GM12878 (cell line): ENCODE measurements at regions of chr2 and their contacts with region 1.

Region 1: DNA sequence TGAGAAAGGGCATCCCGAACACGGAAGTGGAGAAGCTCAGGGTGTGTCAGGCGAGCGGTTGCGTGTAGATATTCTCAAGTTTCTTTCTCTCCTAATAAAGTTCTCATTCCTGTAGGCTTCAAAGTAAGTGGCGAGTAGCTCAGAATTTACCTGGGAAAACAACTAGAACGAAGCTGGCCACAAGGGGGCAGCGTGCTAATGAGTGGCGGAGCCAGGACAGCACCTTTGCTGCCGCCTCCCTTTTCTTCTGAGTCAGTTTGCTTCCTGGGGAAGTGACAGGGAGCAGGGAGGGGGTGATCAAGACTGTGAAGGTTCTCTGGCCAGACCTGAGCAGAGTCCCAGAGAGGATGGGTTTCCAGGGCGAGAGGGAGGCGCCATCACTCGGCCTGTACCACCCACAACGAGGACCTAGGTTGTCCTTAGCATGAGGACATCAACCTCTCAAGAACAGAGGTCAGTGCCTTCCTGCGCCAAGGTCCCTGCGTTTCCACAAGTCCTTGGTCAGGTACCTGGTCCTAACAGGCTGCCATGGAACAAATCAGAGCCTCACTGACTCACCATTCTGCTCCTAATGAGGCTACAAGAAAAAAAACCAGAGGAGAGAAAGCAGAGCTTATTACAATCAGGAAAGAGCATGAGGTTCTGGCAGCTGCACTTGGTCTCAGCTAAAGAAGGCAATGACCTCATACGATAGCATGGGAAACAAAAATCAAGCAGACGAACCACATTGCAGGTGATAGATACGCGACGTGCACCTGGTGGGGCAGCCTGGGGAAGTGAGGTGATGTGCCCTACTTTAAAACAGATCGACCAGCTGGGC is 98.6 kb downstream of the PLB1 start:
- DNase-seq: peak; percentile 28
- ATAC-seq: peak; percentile 94
- H3K4me3 ChIP-seq: no peak overlapping the region
- H3K27ac ChIP-seq: no peak overlapping the region
- H3K4me1 ChIP-seq: 0 out of 2 replicates have a peak, but pooled peaks cover 3% of the 10 kb centered on the region
- H3K27me3 ChIP-seq: no peaks in the 10 kb centered on the region; a peak in 1 of 4 replicates
- CTCF ChIP-seq: peak; percentile 78 to 86 (median 79)
- EP300 ChIP-seq: no peak
- POLR2A ChIP-seq: no peak
- RAD21 ChIP-seq: peak; percentile 90

Region 2: DNA sequence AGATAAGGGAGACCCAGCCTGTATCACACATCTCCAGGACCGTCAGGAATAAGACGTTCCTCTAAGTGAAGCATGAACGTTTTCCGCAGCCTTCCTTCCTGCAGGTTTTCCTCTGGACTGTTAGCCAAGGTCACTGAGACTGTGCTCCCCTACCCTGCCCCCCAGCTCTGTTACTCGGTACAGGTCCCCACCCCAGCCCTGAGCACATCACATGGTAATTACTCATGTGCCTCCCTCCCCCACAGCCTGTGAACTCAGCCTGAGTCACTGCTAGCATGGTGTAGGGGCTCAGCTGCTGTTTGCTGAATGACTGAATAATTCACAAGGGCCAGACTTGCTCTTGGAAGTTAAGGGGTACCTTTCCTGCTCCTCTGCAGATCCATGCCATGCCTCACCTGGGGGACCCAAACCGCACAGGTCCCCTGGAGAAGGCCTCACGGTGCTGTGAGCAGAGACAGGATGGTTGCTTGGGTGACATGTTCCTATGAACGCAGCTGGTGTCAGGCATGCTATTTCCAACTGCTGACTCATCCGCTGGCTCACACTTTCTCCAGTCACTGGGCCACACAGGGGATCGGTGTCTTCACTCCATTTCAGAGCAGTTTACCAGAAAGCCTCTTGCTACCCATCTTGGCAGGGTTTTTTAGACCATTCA is 10.5 kb before region 1 on chr2:
- CTCF ChIA-PET with region 1: interaction called, 22 read pairs
- POLR2A ChIA-PET with region 1: no interaction called
- RAD21 ChIA-PET with region 1: interaction called, 3 read pairs
- SMC1A ChIA-PET with region 1: interaction called, 3 read pairs
- in situ Hi-C with region 1: no loop called
- intact Hi-C with region 1: no loop called
- DNase-seq: no peak
- ATAC-seq: peak; percentile 56
- H3K4me3 ChIP-seq: no peak overlapping the region
- H3K27ac ChIP-seq: no peak overlapping the region
- H3K4me1 ChIP-seq: peaks cover 7% of the 10 kb centered on the region; the same call in 1 of the 2 replicates
- H3K27me3 ChIP-seq: no peaks in the 10 kb centered on the region
- CTCF ChIP-seq: no peak
- EP300 ChIP-seq: no peak
- POLR2A ChIP-seq: no peak
- RAD21 ChIP-seq: no peak

Region 3: DNA sequence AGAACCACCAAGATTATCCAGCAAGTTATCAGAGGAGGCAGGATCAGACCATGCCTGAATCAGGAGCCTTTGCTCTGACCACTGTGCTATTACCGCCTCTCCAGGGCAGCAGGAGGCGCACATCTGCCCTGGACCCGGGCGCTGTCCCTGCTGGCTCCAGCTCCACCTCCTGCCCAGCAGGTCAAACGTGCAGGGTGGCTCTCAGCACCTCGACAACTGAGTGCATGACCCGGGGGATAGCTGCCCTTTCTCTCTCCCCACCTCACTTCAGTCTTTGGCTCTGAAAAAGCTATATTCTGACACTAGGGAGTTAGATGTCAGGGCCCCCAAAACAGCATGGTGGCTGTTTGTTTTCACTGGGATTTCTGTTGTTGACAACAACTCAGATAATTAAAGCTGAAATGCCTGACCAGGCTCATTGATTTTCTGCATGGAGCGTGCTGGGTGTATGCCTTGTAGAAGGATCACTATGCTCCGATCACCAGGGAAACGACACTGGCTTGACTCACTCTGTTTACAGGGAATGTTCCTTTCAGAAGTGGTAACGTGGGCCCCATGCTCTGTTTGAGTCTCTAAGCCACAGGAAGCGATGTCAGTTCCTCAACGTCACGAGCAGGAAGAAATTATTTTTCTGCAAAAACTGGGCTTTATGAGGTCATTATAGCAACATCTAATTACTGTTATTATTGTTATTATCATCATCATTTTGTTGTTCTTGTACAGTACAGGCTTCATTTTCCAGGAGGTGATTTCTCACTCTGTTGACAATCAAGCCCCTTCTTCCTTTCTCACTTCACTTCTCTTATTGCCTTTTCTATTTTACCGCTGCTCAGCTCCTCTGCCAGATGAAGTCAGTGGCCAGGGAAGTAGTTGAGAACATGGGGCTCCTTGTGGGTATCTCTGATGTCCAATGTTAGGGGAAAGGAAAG is 26.9 kb after region 1 on chr2:
- CTCF ChIA-PET with region 1: interaction called, 14 read pairs
- POLR2A ChIA-PET with region 1: no interaction called
- RAD21 ChIA-PET with region 1: interaction called, 4 read pairs
- SMC1A ChIA-PET with region 1: interaction called, 4 read pairs
- in situ Hi-C with region 1: no loop called
- intact Hi-C with region 1: no loop called
- DNase-seq: no peak
- ATAC-seq: peak; percentile 75
- H3K4me3 ChIP-seq: no peak overlapping the region
- H3K27ac ChIP-seq: no peak overlapping the region
- H3K4me1 ChIP-seq: peaks cover 21% of the 10 kb centered on the region
- H3K27me3 ChIP-seq: no peaks in the 10 kb centered on the region; a peak in 1 of 4 replicates
- CTCF ChIP-seq: peak; percentile 26 to 32 (median 28); a peak in 4 of 6 replicates
- EP300 ChIP-seq: no peak
- POLR2A ChIP-seq: no peak
- RAD21 ChIP-seq: peak; percentile 49

Region 4: DNA sequence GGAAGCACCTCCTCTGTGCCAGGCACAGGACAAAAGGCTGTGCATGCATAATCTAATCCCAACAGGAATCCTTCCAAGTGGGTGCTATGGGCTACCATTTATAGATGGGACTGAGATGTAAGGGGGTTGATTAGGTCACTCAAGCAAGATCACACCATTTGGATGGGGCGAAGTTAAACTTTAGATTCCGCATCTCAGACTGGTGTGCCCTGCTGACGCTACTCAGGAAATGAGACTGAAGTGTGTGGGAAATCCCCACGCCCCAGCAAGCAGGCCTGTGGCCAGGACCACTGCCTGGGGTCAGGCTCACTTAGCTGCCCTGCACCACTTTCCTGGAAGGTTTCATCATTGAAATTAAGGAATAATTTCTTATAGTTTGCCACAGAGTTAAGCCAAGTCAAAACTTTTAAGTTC is 86.7 kb after region 1 on chr2:
- CTCF ChIA-PET with region 1: interaction called, 19 read pairs
- POLR2A ChIA-PET with region 1: no interaction called
- RAD21 ChIA-PET with region 1: interaction called, 6 read pairs
- SMC1A ChIA-PET with region 1: interaction called, 6 read pairs
- in situ Hi-C with region 1: no loop called
- intact Hi-C with region 1: no loop called
- DNase-seq: peak; percentile 62
- ATAC-seq: peak; percentile 99
- H3K4me3 ChIP-seq: no peak overlapping the region
- H3K27ac ChIP-seq: peak overlapping the region; percentile 49; the same call in 1 of the 2 replicates
- H3K4me1 ChIP-seq: peaks cover 15% of the 10 kb centered on the region
- H3K27me3 ChIP-seq: no peaks in the 10 kb centered on the region
- CTCF ChIP-seq: no peak
- EP300 ChIP-seq: no peak
- POLR2A ChIP-seq: 0 out of 2 replicates have a peak, but pooled peaks have one; percentile 21
- RAD21 ChIP-seq: no peak

Region 5: GRCh38 chr2:28751252-28751955 is 156.9 kb after region 1 on chr2 and contains the start of gene PPP1CB:
- CTCF ChIA-PET with region 1: interaction called, 155 read pairs
- POLR2A ChIA-PET with region 1: interaction called, 16 read pairs
- RAD21 ChIA-PET with region 1: interaction called, 61 read pairs
- SMC1A ChIA-PET with region 1: interaction called, 36 read pairs
- in situ Hi-C with region 1: loop called (anchors 5 kb)
- intact Hi-C with region 1: loop called (anchors 1 kb)
- DNase-seq: peak; percentile 87
- ATAC-seq: peak; percentile 91
- H3K4me3 ChIP-seq: peak within 1 kb of the TSS; percentile 98
- H3K27ac ChIP-seq: peak within 1 kb of the TSS; percentile 90
- H3K4me1 ChIP-seq: peaks cover 6% of the 10 kb centered on the region; the same call in 1 of the 2 replicates
- H3K27me3 ChIP-seq: no peaks in the 10 kb centered on the region
- CTCF ChIP-seq: peak; percentile 18 to 31 (median 27); a peak in 3 of 6 replicates
- EP300 ChIP-seq: peak in 1 of 2 experiments; percentile 21; a peak in 1 of 4 replicates
- POLR2A ChIP-seq: peak; percentile 85
- RAD21 ChIP-seq: no peak
- polyA plus RNA-seq, gene PPP1CB: 84.4 to 176 TPM

Region 6: GRCh38 chr2:28768422-28768821 is 173.9 kb after region 1 on chr2:
- CTCF ChIA-PET with region 1: interaction called, 13 read pairs
- POLR2A ChIA-PET with region 1: no interaction called
- RAD21 ChIA-PET with region 1: no interaction called
- SMC1A ChIA-PET with region 1: interaction called, 6 read pairs
- in situ Hi-C with region 1: no loop called
- intact Hi-C with region 1: no loop called
- DNase-seq: no peak
- ATAC-seq: no peak
- H3K4me3 ChIP-seq: no peak overlapping the region
- H3K27ac ChIP-seq: no peak overlapping the region
- H3K4me1 ChIP-seq: no peaks in the 10 kb centered on the region
- H3K27me3 ChIP-seq: no peaks in the 10 kb centered on the region
- CTCF ChIP-seq: no peak
- EP300 ChIP-seq: no peak
- POLR2A ChIP-seq: no peak
- RAD21 ChIP-seq: no peak

Region 7: GRCh38 chr2:28821295-28821958 is 226.9 kb after region 1 on chr2:
- CTCF ChIA-PET with region 1: interaction called, 24 read pairs
- POLR2A ChIA-PET with region 1: no interaction called
- RAD21 ChIA-PET with region 1: interaction called, 11 read pairs
- SMC1A ChIA-PET with region 1: interaction called, 7 read pairs
- in situ Hi-C with region 1: no loop called
- intact Hi-C with region 1: no loop called
- DNase-seq: peak; percentile 25
- ATAC-seq: peak; percentile 89
- H3K4me3 ChIP-seq: no peak overlapping the region
- H3K27ac ChIP-seq: no peak overlapping the region
- H3K4me1 ChIP-seq: no peaks in the 10 kb centered on the region
- H3K27me3 ChIP-seq: no peaks in the 10 kb centered on the region
- CTCF ChIP-seq: peak; percentile 65 to 75 (median 67)
- EP300 ChIP-seq: no peak
- POLR2A ChIP-seq: no peak
- RAD21 ChIP-seq: peak; percentile 79

Region 8: DNA sequence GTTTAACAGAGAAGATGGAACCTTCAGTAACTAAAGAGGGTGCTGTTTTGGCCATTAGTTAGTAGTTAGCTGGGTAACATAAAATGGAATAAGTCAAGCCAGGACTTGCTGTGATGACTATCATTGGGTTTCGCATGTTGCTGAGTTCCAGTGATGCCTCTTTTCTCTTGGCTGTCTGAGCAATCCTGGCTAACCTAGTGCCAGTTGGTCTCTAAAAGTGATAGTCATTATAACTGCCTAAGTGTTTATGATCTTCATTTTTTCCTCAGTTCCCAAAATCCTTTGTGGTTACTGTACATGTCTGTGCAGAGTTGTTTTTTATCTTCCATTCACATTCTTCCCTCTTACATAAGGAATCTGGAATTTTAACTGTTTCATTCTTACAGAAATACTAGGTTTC is 333.4 kb after region 1 on chr2:
- CTCF ChIA-PET with region 1: no interaction called
- POLR2A ChIA-PET with region 1: no interaction called
- RAD21 ChIA-PET with region 1: no interaction called
- SMC1A ChIA-PET with region 1: no interaction called
- in situ Hi-C with region 1: no loop called
- intact Hi-C with region 1: no loop called
- DNase-seq: no peak
- ATAC-seq: no peak
- H3K4me3 ChIP-seq: no peak overlapping the region
- H3K27ac ChIP-seq: no peak overlapping the region
- H3K4me1 ChIP-seq: no peaks in the 10 kb centered on the region
- H3K27me3 ChIP-seq: no peaks in the 10 kb centered on the region
- CTCF ChIP-seq: no peak
- EP300 ChIP-seq: no peak
- POLR2A ChIP-seq: no peak
- RAD21 ChIP-seq: no peak